ENCODE measurements at regions of chr1 and their contacts with region 1.

Region 1: GRCh38 chr1:10430216-10431069 is at the start of gene CENPS:
- DNase-seq: peak; percentile 90 to 92
- ATAC-seq: peak; percentile 96 to 98 (median 98)
- H3K4me3 ChIP-seq: peak within 1 kb of the TSS; percentile 52 to 93 (median 75)
- H3K27ac ChIP-seq: peak within 1 kb of the TSS in 9 of 10 donors; percentile 43 to 81 (median 67)
- H3K4me1 ChIP-seq: peaks cover 0 to 19% (median 13%) of the 10 kb centered on the region in 9 donors
- H3K27me3 ChIP-seq: no peaks in the 10 kb centered on the region
- CTCF ChIP-seq: peak; percentile 92 to 98 (median 96)
- total RNA-seq, gene CENPS: 4.9 to 10.7 (median 9.4) TPM

Region 2: DNA sequence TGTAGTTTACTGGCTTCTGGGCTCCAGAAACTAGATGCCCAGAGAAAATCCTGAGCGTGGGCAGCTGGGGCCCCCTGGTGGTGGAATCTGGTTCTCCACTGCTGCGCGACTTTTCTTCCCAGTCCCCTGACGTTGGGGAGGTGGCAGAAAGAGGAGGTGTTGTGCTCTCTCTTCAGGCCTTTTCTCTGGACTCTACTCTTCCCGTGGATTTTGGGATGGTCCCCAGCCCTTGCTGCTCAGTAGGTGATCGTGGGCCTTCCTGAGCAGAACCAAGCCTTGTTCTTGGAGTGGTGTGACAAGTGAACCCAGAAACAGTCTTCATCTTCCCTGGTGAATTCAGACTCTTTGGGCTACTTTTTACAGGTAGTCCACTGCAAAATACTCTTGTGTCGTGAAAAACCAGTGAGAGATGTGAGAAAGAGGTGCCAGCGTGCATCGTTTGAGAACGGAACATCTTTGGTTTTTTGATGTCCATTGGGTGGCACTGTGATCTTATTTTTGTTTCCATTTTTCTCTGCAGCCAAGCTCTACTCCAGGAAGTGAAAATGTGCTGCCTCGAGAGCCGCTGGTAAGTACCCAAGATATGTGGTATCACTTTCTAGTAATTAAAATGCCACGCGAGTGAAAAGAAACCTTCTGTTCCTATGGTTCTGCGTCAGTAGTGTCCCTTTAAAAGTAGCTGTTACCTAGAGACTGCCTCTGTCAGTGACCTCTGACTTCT is 64.5 kb after region 1 on chr1:
- intact Hi-C with region 1: loop called in 9 of 10 experiments (anchors 1 to 10 kb)
- DNase-seq: peak; percentile 65 to 68
- ATAC-seq: peak; percentile 69 to 92 (median 86)
- H3K4me3 ChIP-seq: peak overlapping the region in 6 of 10 donors; percentile 23 to 47 (median 35)
- H3K27ac ChIP-seq: peak overlapping the region in 6 of 10 donors; percentile 11 to 82 (median 51)
- H3K4me1 ChIP-seq: peaks cover 0 to 36% (median 23%) of the 10 kb centered on the region in 9 donors
- H3K27me3 ChIP-seq: no peaks in the 10 kb centered on the region
- CTCF ChIP-seq: peak; percentile 80 to 92 (median 88)

Measured in heart right ventricle (tissue), 16 donors.